ENCODE measurements at regions of chr2 and their contacts with region 1.

Region 1: DNA sequence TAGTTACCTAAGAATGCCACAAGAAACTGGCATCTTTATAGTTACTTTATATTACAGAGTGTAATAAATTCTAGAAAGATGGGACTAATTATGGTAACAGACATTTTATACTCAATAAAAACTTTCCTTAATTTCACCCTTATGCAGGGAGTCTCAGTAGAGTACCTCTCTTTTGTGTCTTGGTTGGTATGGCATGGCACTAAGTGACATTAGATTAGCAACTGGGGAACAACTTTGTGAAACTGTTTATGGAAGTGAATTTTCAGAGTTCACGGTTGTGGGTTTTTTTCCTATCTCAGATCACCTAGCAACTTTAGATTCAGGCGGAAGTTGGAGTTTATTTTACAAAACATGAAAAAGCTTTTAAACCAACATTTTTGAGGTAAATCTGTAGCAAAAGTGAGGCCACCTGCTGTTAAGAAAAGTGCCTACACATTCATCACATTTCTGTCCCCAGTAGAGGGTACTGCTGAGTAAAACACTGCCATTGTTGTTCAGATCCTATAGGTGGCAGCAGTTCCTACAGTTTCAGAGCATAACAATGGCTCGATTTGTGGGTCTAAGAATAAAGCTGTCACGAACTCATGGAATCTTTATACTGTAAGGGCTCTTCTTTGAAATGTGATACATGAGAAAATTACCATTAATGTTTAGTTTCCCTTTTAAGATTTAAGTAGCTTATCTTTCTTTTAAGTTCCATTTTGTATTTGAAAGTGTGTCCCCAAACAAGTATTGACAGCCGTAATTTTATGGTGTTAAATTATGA is 117.6 kb downstream of the CAMKMT start:
- DNase-seq: no peak

Region 2: DNA sequence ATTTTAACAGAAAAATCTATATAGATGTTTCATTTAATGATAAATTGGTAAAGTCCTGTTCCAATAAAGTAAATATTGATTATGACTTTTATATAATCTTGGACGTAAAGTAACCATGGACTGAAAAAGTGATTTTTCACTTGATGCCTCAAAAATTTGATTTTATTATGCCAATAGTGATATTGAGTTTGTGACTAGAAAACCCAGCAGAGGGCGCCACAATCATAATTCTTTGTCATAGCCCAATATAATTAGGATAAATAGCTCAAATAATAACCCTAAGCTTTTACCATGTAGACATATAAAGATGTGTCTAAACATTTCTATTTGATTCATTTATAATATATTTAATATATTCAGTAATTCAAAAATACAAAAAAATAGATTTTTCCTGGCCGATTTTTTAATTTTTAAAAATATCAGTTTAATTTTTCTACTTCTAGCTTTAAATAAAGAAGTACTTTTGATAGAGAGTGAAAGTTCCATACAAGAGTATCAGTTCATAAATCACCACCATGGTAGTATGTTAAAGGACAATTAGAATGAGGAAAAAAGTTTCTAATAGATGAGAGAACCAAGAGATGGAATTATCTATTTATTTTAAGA is 86.9 kb before region 1 on chr2:
- intact Hi-C with region 1: loop called (anchors 5 kb)
- DNase-seq: no peak

Measured in cardiac septum (tissue), 1 donor.